ENCODE measurements at regions of chr1 and their contacts with region 1.

Region 1: GRCh38 chr1:29703596-29704370 is 467.5 kb downstream of the PTPRU start:
- DNase-seq: no peak
- H3K4me3 Mint-ChIP-seq: no peak overlapping the region
- H3K27ac Mint-ChIP-seq: no peak overlapping the region
- H3K4me1 Mint-ChIP-seq: peaks cover 11% of the 10 kb centered on the region
- H3K27me3 Mint-ChIP-seq: peaks cover 20% of the 10 kb centered on the region

Region 2: DNA sequence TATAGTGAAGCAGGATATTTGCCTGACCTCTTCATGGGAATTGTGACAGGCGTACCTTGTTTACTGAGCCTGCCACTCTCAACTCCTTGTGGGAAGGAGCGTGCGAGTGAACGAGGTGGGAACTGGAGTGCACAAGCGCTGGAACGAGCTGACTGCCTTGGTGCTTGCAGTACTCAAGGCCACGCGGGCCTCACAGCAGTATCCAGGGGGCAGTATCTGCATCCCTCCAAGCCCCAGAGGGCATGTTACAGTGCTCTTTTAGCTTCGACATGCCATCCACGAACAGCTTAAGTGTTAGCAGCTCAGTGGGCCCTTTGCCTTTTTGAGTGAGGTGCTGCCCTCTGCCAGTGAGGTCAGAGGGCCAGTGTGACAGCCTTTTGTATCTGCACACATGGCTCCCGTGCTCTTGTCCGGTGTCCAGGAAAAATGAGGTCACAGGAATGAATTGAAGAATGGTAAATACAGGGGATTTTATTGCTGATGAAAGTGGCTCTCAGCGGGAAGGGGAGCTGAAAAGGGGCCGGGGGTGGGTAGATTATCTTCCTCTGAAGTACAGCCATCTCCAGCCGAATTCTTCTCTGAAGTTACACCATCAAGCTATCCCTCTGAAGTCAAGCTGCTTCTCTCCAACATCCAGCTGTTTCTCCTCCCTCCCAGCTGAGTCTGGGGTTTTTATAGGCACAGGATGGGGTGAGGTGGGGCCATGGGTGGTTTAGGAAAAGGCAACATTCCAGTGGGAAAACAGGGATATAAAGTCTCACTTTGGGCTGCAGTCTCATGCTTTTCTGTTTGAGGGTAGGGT is 720.1 kb before region 1 on chr1:
- intact Hi-C with region 1: no loop called
- DNase-seq: no peak
- H3K4me3 Mint-ChIP-seq: no peak overlapping the region
- H3K27ac Mint-ChIP-seq: no peak overlapping the region
- H3K4me1 Mint-ChIP-seq: peaks cover 18% of the 10 kb centered on the region
- H3K27me3 Mint-ChIP-seq: no peaks in the 10 kb centered on the region

Region 3: DNA sequence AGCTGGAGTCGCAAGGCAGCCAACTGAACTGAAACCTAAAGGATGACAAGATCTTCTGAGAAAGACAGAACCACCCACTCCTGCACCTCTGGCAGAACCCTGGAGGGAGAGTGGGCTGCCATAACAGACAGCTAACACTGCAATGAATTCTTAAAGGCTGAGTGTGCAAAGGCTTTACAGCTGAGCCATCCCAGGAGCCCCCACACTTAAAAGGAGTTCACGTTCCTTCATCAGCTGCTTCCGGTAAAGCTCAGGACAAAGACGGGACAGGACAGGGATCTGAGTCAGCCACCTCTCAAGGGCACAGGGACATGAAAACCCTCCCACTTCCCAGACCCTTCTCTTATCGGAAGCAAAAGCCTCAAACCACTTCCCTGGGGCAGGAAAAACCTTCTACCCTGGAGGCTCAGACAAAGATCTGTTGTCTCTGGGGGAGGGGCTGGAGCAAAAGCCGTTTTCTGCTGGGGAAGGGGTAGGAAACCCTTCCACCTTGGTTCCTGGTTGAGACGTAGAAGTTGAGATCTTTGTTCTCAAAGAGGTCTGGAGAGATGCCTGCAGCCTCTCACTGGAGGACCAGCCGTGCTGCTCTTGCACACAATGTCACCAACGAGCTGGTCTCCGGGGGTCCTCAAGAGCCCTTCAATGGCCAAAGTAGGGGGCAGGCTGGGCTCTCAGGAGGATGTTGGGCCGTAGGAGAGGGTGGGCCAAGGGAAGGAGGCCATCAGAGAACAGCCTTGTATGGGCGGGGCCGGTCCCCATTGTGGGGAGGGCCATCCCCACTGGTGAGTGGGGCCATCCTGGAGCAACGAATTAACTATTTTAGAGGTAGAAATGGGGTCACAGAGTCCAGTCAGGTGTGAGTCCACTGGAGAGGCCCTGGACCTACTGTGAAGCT is 15.1 kb before region 1 on chr1:
- intact Hi-C with region 1: loop called (anchors 1 kb)
- DNase-seq: peak; percentile 22
- H3K4me3 Mint-ChIP-seq: peak overlapping the region; percentile 60
- H3K27ac Mint-ChIP-seq: peak overlapping the region; percentile 85
- H3K4me1 Mint-ChIP-seq: peaks cover 54% of the 10 kb centered on the region
- H3K27me3 Mint-ChIP-seq: peaks cover 5% of the 10 kb centered on the region